HepG2 (cell line): ENCODE measurements at regions of chr1 and their contacts with region 1.

Region 1: DNA sequence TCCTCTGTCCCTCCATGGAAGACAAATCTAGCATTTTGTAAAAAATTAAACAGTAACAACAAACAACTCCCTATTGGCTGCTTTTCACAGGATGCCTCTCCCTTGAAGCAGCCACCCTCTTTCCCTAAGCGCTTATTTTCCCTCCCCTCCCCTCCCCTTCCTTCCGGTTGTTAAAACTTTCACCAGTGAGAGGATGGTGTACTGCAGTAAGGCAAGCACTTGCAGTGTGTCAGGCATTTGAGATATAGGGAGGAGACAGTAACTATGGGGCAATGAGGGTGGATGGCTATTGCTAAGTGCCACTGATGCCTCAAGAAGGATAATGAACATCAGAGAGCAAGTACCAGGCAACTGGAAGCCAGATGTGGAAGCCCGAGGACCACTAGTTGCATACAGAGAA is 19.1 kb upstream of the KIAA1614 start:
- DNase-seq: no peak
- ATAC-seq: no peak
- H3K4me3 ChIP-seq: no peak overlapping the region
- H3K27ac ChIP-seq: no peak overlapping the region
- H3K4me1 ChIP-seq: peaks cover 6% of the 10 kb centered on the region
- H3K27me3 ChIP-seq: no peaks in the 10 kb centered on the region
- CTCF ChIP-seq: no peak
- EP300 ChIP-seq: no peak
- POLR2A ChIP-seq: no peak
- RAD21 ChIP-seq: no peak

Region 2: GRCh38 chr1:180925471-180926051 is 31.9 kb after region 1 on chr1:
- CTCF ChIA-PET with region 1: no interaction called
- POLR2A ChIA-PET with region 1: no interaction called
- in situ Hi-C with region 1: no loop called
- intact Hi-C with region 1: loop called (anchors 2 kb)
- DNase-seq: peak; percentile 84
- ATAC-seq: peak; percentile 87
- H3K4me3 ChIP-seq: peak overlapping the region in 2 of 3 experiments; percentile 27 to 60; a peak in 3 of 6 replicates
- H3K27ac ChIP-seq: peak overlapping the region; percentile 56
- H3K4me1 ChIP-seq: peaks cover 75% of the 10 kb centered on the region
- H3K27me3 ChIP-seq: no peaks in the 10 kb centered on the region; a peak in 1 of 5 replicates
- CTCF ChIP-seq: no peak; the same call in 1 of the 2 replicates
- EP300 ChIP-seq: peak; percentile 54 to 81; a peak in 3 of 4 replicates
- POLR2A ChIP-seq: 0 out of 4 replicates have a peak, but pooled peaks of 1 of the 2 experiments have one; percentile 18
- RAD21 ChIP-seq: peak; percentile 29; the same call in 1 of the 2 replicates

Region 3: GRCh38 chr1:180981596-180982387 is 88.2 kb after region 1 on chr1:
- CTCF ChIA-PET with region 1: no interaction called
- POLR2A ChIA-PET with region 1: no interaction called
- in situ Hi-C with region 1: no loop called
- intact Hi-C with region 1: no loop called
- DNase-seq: no peak
- ATAC-seq: no peak
- H3K4me3 ChIP-seq: no peak overlapping the region
- H3K27ac ChIP-seq: no peak overlapping the region
- H3K4me1 ChIP-seq: no peaks in the 10 kb centered on the region
- H3K27me3 ChIP-seq: no peaks in the 10 kb centered on the region
- CTCF ChIP-seq: no peak
- EP300 ChIP-seq: no peak
- POLR2A ChIP-seq: no peak
- RAD21 ChIP-seq: no peak